Dendritic cell treated with granulocyte-macrophage colony-stimulating factor and Interleukin-4, amounts not matched to agents 40 ng/mL and 50 ng/mL, for 4 days (primary cell): ENCODE measurements at regions of chr17 and their contacts with region 1.

Region 1: GRCh38 chr17:62164763-62165753 is 100.0 kb upstream of the MED13 start:
- H3K4me3 Mint-ChIP-seq: no peak overlapping the region
- H3K27ac Mint-ChIP-seq: no peak overlapping the region
- H3K4me1 Mint-ChIP-seq: peaks cover 14% of the 10 kb centered on the region
- H3K27me3 Mint-ChIP-seq: peaks cover 2% of the 10 kb centered on the region

Region 2: GRCh38 chr17:61734466-61734865 is 430.6 kb before region 1 on chr17:
- intact Hi-C with region 1: no loop called
- H3K4me3 Mint-ChIP-seq: no peak overlapping the region
- H3K27ac Mint-ChIP-seq: no peak overlapping the region
- H3K4me1 Mint-ChIP-seq: no peaks in the 10 kb centered on the region
- H3K27me3 Mint-ChIP-seq: no peaks in the 10 kb centered on the region

Region 3: DNA sequence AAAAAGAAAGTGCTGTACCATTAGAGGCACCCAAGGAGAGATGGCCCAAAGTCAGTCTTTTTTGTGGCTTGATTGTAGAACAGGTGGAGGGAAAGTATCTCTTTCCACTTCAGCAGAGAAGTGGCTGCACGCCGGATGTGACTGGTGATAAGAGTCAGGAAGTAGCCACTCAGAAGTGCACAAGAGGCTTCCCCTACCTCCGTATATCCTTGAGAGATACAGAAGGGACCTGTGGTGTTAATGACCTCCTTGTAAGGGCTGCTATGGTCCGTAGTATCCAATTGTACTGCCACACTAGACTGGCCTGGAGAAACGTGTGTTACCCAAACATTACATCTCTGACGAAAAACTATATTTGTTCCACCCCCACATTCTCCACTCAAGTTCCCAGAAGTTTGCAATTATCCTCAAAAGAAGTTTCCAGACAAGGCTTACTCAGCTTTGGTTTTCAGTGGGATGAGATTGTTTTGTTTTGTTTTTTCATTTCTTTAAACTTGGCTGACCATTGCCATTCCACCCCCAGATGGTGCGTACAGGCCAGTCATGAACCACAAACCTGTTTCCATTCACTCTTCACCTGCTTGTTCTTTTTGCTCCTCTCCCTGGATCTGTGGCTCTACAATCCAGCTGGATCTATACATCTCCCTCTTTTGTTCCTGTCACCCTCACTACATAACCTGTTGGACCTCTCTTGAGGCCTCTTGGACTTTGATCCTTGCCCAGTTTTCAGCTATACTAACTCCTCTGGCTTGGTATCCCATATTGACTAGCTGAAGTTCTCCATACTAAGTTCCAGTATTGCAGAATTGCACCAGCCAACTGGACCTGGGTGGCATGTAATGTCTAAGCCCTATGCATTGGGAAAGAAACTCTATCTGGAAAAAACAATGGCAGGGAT is 79.3 kb before region 1 on chr17:
- intact Hi-C with region 1: no loop called
- H3K4me3 Mint-ChIP-seq: no peak overlapping the region
- H3K27ac Mint-ChIP-seq: no peak overlapping the region
- H3K4me1 Mint-ChIP-seq: peaks cover 16% of the 10 kb centered on the region
- H3K27me3 Mint-ChIP-seq: peaks cover 2% of the 10 kb centered on the region

Region 4: GRCh38 chr17:62219221-62219899 is 54.3 kb after region 1 on chr17:
- intact Hi-C with region 1: loop called (anchors 10 kb)
- H3K4me3 Mint-ChIP-seq: no peak overlapping the region
- H3K27ac Mint-ChIP-seq: no peak overlapping the region
- H3K4me1 Mint-ChIP-seq: peaks cover 16% of the 10 kb centered on the region
- H3K27me3 Mint-ChIP-seq: peaks cover 2% of the 10 kb centered on the region

Region 5: GRCh38 chr17:62381561-62381960 is 216.5 kb after region 1 on chr17:
- intact Hi-C with region 1: no loop called
- H3K4me3 Mint-ChIP-seq: no peak overlapping the region
- H3K27ac Mint-ChIP-seq: no peak overlapping the region
- H3K4me1 Mint-ChIP-seq: no peaks in the 10 kb centered on the region
- H3K27me3 Mint-ChIP-seq: peaks cover 1% of the 10 kb centered on the region